Activated CD4-positive, alpha-beta T cell treated with anti-CD3 and anti-CD28 coated beads, Interleukin-2, amount 10 ng/mL, durations not matched to agents 24 days and 14 days (primary cell): ENCODE measurements at regions of chr1 and their contacts with region 1.

Region 1: GRCh38 chr1:168466092-168466713 is 77.6 kb downstream of the XCL2 start:
- DNase-seq: peak; percentile 75
- H3K4me3 Mint-ChIP-seq: peak overlapping the region; percentile 32
- H3K27ac Mint-ChIP-seq: peak overlapping the region; percentile 71
- H3K4me1 Mint-ChIP-seq: peaks cover 58% of the 10 kb centered on the region
- H3K27me3 Mint-ChIP-seq: no peaks in the 10 kb centered on the region

Region 2: DNA sequence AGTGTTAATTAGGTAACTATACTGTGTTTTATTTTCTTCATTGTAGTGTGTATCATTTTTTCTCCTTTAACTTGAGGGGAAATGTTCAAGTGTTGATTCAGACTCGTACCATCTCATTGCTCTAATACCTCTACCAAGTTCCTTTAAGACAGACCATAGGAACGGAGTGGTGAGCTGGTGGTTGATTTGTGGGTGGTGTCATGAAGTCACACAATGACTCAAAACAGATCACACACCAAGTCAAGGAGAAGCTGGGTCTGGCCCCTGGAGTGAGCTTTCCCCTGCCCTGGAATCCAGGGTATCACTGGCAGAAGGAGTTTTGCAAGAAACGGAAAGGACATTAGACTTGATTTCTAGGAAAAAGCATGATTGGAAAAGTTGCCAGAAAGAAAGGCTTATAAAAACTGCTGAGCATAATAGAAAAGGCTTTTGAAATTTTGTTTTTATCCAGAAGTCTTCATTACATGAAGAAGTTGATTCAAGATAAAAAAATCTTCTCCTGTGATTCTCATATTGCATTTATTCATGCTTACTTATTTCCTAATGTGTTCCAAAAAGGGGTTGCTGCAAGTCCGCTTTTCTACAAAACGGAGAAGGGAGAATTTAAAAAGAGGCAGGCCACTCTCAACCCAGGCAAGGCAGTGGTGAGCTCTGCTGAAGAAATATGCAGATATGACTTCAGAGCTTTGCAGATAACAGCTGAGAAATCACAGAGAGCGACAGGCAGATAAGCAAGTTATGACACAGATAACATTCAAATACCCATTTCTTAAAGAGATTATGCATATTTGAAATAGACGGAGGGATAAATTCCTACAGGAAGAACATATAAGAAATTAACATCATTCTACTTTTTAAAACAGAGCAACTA is 105.8 kb before region 1 on chr1:
- intact Hi-C with region 1: loop called (anchors 5 kb)
- DNase-seq: peak; percentile 75
- H3K4me3 Mint-ChIP-seq: peak overlapping the region; percentile 3
- H3K27ac Mint-ChIP-seq: peak overlapping the region; percentile 46
- H3K4me1 Mint-ChIP-seq: peaks cover 29% of the 10 kb centered on the region
- H3K27me3 Mint-ChIP-seq: peaks cover 12% of the 10 kb centered on the region

Region 3: DNA sequence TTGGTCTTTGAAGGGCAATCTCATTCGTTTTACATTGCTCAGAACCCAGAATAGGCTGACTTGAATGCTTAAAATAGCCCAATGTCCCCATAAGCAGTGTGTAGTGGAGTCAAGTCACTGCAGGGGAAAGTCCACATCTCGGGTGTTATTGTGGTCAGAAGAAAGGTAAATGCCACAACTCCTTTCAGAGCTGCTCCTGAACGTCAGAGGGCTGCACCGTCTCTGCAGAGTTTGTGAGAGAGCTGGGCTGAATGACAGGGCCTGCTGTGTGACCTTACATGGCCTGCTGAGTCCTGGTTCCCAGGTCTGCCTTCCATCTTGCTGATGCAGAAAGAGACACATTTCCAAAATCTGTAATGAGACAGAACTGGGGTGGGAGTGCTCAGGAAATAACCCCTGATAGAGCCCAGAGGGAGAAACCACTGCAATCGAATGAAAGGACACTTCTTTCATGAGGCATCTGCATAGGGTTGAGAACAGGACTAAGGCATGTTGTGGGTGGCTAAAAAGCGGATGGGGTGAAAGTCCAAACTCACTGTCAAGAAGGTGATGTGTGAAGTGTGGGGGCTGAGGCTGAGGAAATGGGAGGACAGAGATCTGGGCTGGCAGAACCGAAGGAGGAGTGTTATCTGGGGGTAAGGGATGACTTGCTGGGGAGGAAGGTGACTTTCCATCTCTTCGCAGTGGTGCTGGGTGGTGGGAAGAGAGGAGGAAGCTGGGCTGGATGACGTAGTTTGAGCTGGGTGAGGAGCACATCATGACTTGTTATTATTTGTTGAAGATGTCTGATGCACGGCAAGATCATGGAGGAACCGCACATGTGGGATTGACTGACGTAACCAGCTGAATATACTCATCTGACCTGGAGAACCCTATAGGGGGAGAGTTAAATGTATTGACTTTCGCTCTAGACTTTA is 43.9 kb after region 1 on chr1:
- intact Hi-C with region 1: loop called (anchors 2 kb)
- DNase-seq: peak; percentile 74
- H3K4me3 Mint-ChIP-seq: peak overlapping the region; percentile 12
- H3K27ac Mint-ChIP-seq: peak overlapping the region; percentile 80
- H3K4me1 Mint-ChIP-seq: peaks cover 60% of the 10 kb centered on the region
- H3K27me3 Mint-ChIP-seq: no peaks in the 10 kb centered on the region

Region 4: GRCh38 chr1:168572633-168573032 is 106.4 kb after region 1 on chr1:
- intact Hi-C with region 1: loop called (anchors 5 kb)
- DNase-seq: no peak
- H3K4me3 Mint-ChIP-seq: no peak overlapping the region
- H3K27ac Mint-ChIP-seq: no peak overlapping the region
- H3K4me1 Mint-ChIP-seq: peaks cover 21% of the 10 kb centered on the region
- H3K27me3 Mint-ChIP-seq: peaks cover 21% of the 10 kb centered on the region